ENCODE measurements at regions of chr4 and their contacts with region 1.

Region 1: GRCh38 chr4:109433205-109434006 is at the start of gene SEC24B:
- DNase-seq: no peak
- H3K4me3 ChIP-seq: peak within 1 kb of the TSS; percentile 67
- H3K27me3 ChIP-seq: no peaks in the 10 kb centered on the region
- CTCF ChIP-seq: peak; percentile 29
- polyA plus RNA-seq, gene SEC24B: 43.1 and 53.6 TPM in 2 replicates

Region 2: DNA sequence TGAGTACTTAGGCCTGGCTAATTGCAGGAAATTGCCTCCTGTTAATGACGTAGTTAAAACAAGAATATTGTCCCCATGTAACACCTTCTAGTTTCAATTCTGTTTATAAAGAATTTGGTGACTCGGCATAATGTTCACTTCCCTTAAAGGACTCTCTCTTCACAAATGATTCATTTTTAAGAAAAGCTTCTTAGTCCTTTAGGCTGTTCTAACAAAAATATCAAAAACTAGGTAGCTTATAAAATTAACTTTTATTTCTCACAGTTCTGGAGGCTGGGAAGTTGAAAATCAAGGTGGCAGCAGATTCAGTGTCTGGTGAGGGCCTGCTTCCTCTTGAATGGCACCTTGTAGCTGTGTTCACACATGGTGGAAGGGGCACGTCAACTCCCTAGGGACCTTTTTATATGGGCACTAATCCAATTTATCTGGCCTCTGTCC is 154.8 kb before region 1 on chr4:
- CTCF ChIA-PET with region 1: no interaction called
- POLR2A ChIA-PET with region 1: no interaction called
- DNase-seq: no peak
- H3K4me3 ChIP-seq: no peak overlapping the region
- H3K27me3 ChIP-seq: no peaks in the 10 kb centered on the region
- CTCF ChIP-seq: no peak

Region 3: DNA sequence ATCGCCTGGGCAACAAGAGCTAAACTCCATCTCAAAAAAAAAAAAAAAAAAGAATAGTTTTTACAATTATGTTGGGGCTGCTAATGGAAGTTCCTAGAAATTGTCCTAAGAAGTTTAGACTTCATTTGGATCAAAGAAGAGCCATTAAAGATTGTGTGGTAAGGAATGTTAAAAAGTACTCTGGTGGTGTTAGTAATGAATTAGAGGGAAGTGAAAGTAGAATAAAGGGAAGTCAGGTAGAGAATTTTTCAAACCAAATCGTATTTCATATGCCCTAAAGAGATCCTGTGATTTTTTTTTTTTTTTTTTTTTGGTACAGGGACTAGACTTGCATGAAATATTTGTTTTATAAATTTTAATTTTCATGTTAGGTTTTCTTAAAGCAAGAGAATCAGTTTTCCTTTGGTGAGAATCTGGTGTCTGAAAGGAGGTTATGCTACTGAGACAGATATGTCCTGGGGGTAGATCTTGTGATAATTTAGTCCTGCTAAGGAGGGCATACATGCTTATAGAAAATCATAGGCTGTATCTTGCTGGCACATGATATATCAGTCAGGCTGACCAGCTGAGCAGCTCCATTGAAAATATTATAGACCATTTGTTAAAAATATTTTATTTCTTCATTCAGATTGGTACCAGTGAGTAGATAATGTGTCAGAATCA is 10.9 kb after region 1 on chr4:
- CTCF ChIA-PET with region 1: interaction called, 29 read pairs
- POLR2A ChIA-PET with region 1: interaction called, 5 read pairs
- DNase-seq: no peak
- H3K4me3 ChIP-seq: no peak overlapping the region
- H3K27me3 ChIP-seq: no peaks in the 10 kb centered on the region
- CTCF ChIP-seq: no peak

Region 4: DNA sequence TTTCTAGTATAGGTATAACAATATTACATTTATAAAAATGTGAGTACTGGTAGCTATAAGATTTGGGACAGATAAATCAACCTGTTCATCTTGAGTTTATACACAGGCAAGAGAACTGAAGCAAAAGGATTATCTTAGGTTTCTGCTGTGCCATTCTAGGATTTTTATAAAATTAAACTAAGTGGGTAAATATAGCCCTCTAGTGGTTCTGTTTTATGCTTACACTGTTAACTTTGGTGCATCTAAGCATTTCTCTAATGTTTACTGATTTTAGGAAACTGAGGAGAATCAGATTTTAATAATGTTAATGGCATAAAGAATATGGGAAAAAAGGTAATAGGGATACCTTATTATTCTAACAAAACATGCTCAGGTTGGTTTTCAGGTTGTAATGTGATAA is 393.3 kb after region 1 on chr4:
- CTCF ChIA-PET with region 1: interaction called, 14 read pairs
- POLR2A ChIA-PET with region 1: no interaction called
- DNase-seq: no peak
- H3K4me3 ChIP-seq: no peak overlapping the region
- H3K27me3 ChIP-seq: no peaks in the 10 kb centered on the region
- CTCF ChIP-seq: peak; percentile 60

Measured in BJ (cell line).